ENCODE measurements at regions of chr20 and their contacts with region 1.

Region 1: GRCh38 chr20:47272893-47273590 is 83.5 kb downstream of the ZMYND8 start:
- DNase-seq: peak; percentile 66
- H3K4me3 ChIP-seq: no peak overlapping the region
- CTCF ChIP-seq: peak; percentile 78

Region 2: DNA sequence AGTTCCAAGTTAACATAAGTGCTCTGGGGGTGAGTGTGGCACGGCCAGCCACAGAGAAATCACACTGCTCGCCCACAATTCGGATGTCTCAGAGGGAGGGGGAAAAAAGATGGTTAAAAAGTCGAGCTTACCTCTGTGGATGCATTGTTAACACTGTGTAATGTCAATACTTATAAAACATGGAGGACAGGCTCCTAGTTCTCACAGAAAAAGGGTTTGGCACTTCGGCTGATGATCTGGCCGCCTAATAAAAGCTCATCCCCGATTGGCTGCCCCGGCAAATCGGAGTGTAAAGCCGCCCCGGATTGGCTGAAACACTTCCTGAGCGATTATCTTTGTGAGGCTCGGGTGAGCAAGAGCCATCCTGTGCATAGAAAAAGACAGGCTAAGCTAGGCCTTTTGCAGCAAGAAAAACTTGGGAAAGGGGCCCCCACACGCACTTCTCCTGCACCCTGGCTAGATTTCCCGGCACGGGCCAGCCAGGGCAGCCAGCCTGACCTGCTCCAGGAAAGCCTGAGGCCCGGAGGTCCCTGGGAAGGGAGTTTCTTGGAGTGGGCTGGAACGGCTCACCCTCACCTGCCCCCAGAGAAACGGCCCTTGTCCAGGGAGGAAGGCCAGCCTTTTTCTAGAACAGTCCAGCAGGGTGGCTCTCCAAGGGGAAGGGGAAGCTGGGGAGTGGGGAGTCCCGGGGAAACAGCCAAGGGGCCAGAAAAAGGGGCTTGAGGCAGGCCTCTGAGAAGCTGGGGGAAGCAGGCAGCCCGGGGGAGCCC is 83.7 kb after region 1 on chr20 and contains the start of gene ZMYND8:
- in situ Hi-C with region 1: loop called (anchors 5 kb)
- DNase-seq: peak; percentile 77
- H3K4me3 ChIP-seq: peak within 1 kb of the TSS; percentile 17
- CTCF ChIP-seq: no peak

Region 3: DNA sequence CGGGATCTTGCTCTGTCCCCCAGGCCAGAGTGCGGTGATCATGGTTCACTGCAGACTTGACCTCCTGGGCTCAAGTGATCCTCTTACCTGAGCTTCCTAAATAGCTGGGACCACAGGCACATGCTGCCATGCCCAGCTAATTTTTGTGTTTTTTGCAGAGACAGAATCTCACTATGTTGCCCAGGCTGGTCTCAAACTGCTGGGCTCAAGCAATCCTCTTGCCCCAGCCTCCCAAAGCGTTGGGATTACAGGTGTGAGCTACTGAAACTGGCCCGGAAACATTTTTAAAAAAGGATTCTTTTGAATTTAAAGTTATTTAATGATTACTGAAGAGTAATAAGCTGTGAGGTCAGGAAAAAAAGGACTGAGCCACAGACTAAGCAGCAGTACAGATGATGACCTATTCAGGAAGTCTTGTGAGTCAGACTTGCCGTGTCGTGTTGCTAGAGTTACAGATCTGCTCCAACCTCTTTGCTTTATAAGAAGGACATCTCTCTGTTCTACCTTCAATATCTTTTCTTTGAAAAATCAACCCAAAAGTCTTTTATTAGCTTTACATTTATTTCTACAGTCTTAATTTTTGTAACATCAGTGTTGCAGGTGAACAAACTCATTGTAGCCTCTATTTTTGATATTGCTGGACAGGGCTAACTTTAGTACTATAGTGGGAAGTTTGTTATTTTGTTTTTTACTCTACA is 337.4 kb after region 1 on chr20:
- in situ Hi-C with region 1: loop called (anchors 10 kb)
- DNase-seq: peak; percentile 63
- H3K4me3 ChIP-seq: no peak overlapping the region
- CTCF ChIP-seq: no peak